Activated CD4-positive, alpha-beta T cell treated with anti-CD3 and anti-CD28 coated beads for 36 hours (primary cell): ENCODE measurements at regions of chr12 and their contacts with region 1.

Region 1: GRCh38 chr12:47419497-47419896 is 286.3 kb downstream of the RPAP3 start:
- DNase-seq: no peak
- ATAC-seq: peak; percentile 93
- H3K4me3 Mint-ChIP-seq: no peak overlapping the region
- H3K27ac Mint-ChIP-seq: peak overlapping the region; percentile 56
- H3K4me1 Mint-ChIP-seq: peaks cover 56% of the 10 kb centered on the region
- H3K27me3 Mint-ChIP-seq: no peaks in the 10 kb centered on the region

Region 2: GRCh38 chr12:47085815-47086252 is 333.7 kb before region 1 on chr12:
- CTCF ChIA-PET with region 1: interaction called, 3 read pairs
- POLR2A ChIA-PET with region 1: no interaction called
- intact Hi-C with region 1: loop called in 1 of 2 experiments (anchors 2 kb)
- DNase-seq: peak; percentile 58
- ATAC-seq: peak; percentile 82
- H3K4me3 Mint-ChIP-seq: no peak overlapping the region
- H3K27ac Mint-ChIP-seq: peak overlapping the region; percentile 30
- H3K4me1 Mint-ChIP-seq: peaks cover 60% of the 10 kb centered on the region
- H3K27me3 Mint-ChIP-seq: no peaks in the 10 kb centered on the region

Region 3: DNA sequence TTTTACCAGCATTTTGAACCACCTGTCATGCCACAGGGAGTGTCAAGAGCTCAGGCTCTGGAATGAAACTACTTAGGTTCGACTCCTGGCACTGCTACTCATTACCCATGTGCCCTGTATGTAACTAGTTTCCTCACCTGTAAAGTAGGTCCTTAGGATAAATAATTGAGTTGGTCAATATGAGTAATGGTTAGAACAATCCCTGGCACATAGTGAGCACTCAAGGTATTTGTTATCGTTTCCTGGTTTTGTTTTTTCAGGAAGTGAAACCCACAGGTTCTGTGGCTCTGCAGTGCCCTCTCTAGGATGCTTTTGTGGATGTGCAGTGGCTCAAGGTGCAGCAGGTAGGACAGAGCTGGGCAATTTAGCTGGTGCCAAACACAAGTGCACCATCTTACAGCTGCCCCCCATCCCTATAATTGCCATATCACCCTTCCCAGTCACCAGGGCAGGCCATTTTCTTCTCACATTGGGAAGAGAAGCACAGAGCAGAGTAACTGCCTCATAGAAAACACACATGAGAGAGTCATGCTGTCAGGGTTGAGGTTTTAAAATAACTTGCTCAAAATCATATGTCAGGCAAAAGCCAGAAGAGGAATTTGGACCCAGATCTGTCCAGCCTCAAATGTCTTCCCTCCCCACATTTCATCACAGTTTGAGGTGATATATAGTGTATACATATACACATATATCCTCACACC is 11.2 kb before region 1 on chr12:
- CTCF ChIA-PET with region 1: interaction called, 15 read pairs
- POLR2A ChIA-PET with region 1: interaction called, 4 read pairs
- intact Hi-C with region 1: no loop called
- DNase-seq: peak; percentile 60
- ATAC-seq: peak; percentile 55
- H3K4me3 Mint-ChIP-seq: no peak overlapping the region
- H3K27ac Mint-ChIP-seq: peak overlapping the region; percentile 52
- H3K4me1 Mint-ChIP-seq: peaks cover 75% of the 10 kb centered on the region
- H3K27me3 Mint-ChIP-seq: no peaks in the 10 kb centered on the region

Region 4: DNA sequence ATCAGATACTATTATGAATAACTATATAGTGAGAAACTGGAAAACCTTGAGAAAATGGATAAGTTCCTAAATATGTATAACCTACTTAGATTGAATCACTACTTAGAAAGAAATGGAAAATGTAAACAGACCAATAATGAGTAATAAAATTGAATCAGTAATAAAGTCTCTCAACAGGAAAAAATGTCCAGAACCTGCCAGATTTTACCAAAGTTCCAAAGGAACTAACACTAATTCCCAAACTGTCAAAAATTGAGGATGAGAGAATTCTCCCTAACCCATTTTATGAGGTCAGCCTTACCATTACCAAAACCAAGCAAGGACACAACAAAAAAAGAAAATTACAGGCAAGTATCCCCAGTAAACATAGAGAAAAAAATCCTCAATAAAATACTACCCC is 14.4 kb after region 1 on chr12:
- CTCF ChIA-PET with region 1: no interaction called
- POLR2A ChIA-PET with region 1: no interaction called
- intact Hi-C with region 1: no loop called
- DNase-seq: no peak
- ATAC-seq: no peak
- H3K4me3 Mint-ChIP-seq: no peak overlapping the region
- H3K27ac Mint-ChIP-seq: no peak overlapping the region
- H3K4me1 Mint-ChIP-seq: no peaks in the 10 kb centered on the region
- H3K27me3 Mint-ChIP-seq: no peaks in the 10 kb centered on the region

Region 5: GRCh38 chr12:47574252-47575021 is 154.9 kb after region 1 on chr12:
- CTCF ChIA-PET with region 1: no interaction called
- POLR2A ChIA-PET with region 1: no interaction called
- intact Hi-C with region 1: loop called in 1 of 2 experiments (anchors 2 kb)
- DNase-seq: no peak
- ATAC-seq: peak; percentile 96
- H3K4me3 Mint-ChIP-seq: no peak overlapping the region
- H3K27ac Mint-ChIP-seq: peak overlapping the region; percentile 94
- H3K4me1 Mint-ChIP-seq: peaks cover 28% of the 10 kb centered on the region
- H3K27me3 Mint-ChIP-seq: no peaks in the 10 kb centered on the region

Region 6: GRCh38 chr12:47602325-47602724 is 182.8 kb after region 1 on chr12:
- CTCF ChIA-PET with region 1: no interaction called
- POLR2A ChIA-PET with region 1: no interaction called
- intact Hi-C with region 1: no loop called
- DNase-seq: no peak
- ATAC-seq: no peak
- H3K4me3 Mint-ChIP-seq: no peak overlapping the region
- H3K27ac Mint-ChIP-seq: no peak overlapping the region
- H3K4me1 Mint-ChIP-seq: peaks cover 18% of the 10 kb centered on the region
- H3K27me3 Mint-ChIP-seq: no peaks in the 10 kb centered on the region